Brain microvascular endothelial cell (primary cell): ENCODE measurements at regions of chr19 and their contacts with region 1.

Region 1: DNA sequence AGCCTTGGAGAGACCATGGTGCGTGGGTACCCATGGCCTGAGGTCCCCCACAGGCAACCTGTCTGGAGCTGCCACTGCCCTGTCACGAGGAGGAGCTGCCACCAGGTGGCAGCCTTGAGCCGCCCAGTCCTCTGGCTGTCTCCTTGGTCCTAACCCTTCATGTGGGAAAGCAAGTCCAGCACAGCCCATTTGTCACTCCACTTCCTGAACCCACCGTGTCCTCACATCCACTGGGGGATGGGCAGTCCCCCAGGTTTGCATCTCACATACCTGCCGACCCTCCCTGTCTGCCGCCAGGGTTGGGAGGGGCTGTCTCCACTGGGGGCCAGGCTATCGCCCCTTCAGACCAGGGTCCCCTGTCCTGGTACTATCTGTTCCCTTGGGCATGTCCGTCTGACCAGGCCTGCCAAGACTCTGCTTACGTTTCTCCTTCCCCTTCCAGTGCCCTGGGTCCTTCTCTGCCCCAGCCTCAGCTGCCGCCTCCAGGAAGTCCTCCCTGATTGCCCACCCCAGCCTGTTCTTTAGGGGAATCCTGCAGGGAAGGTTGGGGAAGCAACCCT is 4.5 kb downstream of the FAM174C start:
- DNase-seq: peak; percentile 58
- H3K4me3 ChIP-seq: no peak overlapping the region
- H3K27ac ChIP-seq: no peak overlapping the region
- H3K27me3 ChIP-seq: peaks cover 14% of the 10 kb centered on the region
- CTCF ChIP-seq: peak; percentile 97

Region 2: DNA sequence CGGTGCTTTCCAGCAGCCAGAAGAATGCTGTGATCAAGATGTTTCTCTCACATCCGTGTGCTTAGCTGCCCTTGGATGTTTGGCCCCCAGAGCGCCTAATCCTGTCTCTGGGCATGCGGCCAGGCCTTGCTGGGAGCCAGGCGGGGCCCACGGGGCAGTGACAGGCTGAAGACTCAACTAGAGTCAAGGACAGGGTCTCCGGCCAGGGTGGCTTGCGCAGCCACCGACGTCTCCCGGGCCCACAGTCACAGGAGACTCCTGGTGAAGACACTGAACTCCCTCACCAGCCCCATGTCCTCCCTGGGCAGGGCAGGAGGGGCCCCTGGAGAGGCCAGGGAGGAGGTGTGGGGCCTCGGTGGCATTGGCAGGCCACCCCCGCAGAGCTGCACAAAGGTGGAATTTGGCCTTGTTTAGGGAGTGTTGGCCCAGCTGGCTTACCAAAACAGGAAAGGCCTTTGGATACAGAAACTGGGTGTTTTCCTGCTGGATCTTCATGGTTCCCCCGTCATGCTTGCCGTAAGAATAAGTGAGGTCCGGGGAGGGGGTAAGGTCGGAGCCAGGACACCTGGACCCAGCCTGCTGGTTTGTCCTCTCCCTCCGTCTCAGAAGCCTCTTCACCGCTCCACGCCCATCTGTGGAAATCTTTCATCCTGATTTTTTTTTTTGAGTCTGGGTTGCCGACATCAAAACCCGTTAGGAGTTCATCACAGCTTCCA is 93.8 kb after region 1 on chr19:
- in situ Hi-C with region 1: loop called (anchors 10 kb)
- DNase-seq: no peak
- H3K4me3 ChIP-seq: no peak overlapping the region
- H3K27ac ChIP-seq: no peak overlapping the region
- H3K27me3 ChIP-seq: no peaks in the 10 kb centered on the region
- CTCF ChIP-seq: no peak

Region 3: GRCh38 chr19:1411255-1412191 is 131.7 kb after region 1 on chr19:
- in situ Hi-C with region 1: loop called (anchors 5 kb)
- DNase-seq: peak; percentile 24
- H3K4me3 ChIP-seq: no peak overlapping the region
- H3K27ac ChIP-seq: no peak overlapping the region
- H3K27me3 ChIP-seq: no peaks in the 10 kb centered on the region
- CTCF ChIP-seq: no peak

Region 4: DNA sequence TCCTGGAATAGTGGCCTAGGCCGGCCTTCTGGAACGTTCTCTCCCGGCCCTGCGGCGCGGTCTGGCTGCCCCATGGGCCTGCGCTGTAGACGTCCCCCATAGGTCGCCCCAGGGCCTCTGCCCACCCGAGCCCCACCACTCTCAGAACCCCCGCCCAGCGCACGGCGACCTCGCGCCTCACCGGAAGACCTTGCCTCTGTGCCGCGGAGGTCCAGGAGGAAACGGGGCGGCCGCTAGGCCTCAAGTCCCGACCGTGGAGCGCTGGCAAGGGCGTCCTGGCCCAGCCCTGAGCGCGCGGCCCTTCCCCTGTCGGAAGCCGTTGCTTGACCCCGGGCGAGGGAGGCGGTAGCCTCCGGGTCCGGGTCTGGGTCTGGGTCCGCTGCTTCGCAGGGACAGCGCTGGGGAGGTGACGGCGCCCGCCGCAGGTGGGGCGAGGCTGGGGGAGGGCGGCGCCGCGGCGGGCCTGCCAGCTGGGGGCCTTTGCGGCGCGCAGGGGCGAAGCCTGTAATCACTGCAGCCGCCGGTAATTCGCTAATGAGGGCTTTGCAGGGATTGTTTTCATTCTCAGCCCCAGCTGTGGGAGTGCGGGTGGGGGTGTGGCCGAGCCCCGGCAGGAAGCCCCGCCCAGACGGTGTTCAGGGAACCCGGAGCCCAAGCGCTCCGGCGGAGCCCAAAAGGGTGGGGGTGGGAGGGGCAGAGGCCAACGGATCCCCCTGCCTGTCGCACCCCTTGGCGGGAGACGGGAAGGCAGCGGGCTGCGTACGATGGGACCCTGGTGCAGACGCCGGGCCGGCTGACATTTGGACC is 190.5 kb after region 1 on chr19:
- in situ Hi-C with region 1: loop called (anchors 5 kb)
- DNase-seq: no peak
- H3K4me3 ChIP-seq: no peak overlapping the region
- H3K27ac ChIP-seq: no peak overlapping the region
- H3K27me3 ChIP-seq: peaks cover 61% of the 10 kb centered on the region
- CTCF ChIP-seq: no peak